ENCODE measurements at regions of chr12 and their contacts with region 1.

Region 1: DNA sequence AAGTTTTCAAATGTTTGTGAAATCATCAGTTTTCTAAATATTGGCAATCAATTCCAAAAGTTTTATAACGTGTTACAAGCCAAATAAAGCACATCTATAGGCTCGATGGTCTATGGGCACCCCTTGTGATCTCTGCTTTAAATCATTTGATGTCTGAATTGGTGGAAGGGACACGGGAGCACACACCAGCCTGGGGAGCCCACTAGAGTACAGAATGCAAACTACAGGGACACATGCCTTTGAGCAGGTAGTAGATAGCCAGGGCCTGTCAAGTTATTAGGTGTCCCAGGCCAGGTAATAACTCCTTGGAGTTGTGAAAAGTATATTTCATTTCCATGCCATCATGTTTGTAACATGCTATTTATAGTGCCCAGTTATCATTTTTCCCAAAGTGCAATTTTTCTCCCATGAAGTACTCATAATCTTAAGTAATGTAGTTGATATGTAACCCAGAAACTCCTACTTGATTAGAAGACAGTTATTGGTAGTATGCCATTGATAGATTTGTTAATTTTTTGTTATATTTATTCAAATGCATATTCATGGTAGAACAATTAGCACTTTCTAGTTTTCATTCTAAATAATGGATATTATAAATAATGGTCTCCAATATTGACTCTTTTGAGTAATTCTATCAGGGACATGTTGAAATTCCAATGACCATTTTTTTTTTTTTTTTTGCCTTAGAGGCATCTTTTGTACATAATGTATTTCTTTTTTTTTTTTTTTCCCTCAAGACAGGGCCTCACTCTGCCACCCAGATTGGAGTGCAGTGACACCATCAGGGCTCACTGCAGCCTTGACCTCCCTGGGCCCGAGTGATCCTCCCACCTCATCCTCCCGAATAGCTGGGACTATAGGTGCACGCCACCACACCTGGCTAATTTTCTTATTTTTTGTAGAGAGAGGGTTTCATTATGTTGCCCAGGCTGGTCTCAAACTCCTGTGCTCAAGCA is 96.9 kb upstream of the FGD4 start:
- DNase-seq: peak; percentile 19 to 54 (median 38)
- ATAC-seq: peak; percentile 94
- H3K4me3 ChIP-seq: no peak overlapping the region
- H3K27ac ChIP-seq: no peak overlapping the region
- H3K4me1 ChIP-seq: peaks cover 0 to 2% of the 10 kb centered on the region in 2 experiments; a peak in 1 of 5 replicates
- H3K27me3 ChIP-seq: no peaks in the 10 kb centered on the region
- CTCF ChIP-seq: peak; percentile 67 to 73 (median 70)
- EP300 ChIP-seq: no peak
- POLR2A ChIP-seq: no peak
- RAD21 ChIP-seq: peak; percentile 22 to 81; a peak in 3 of 4 replicates

Region 2: DNA sequence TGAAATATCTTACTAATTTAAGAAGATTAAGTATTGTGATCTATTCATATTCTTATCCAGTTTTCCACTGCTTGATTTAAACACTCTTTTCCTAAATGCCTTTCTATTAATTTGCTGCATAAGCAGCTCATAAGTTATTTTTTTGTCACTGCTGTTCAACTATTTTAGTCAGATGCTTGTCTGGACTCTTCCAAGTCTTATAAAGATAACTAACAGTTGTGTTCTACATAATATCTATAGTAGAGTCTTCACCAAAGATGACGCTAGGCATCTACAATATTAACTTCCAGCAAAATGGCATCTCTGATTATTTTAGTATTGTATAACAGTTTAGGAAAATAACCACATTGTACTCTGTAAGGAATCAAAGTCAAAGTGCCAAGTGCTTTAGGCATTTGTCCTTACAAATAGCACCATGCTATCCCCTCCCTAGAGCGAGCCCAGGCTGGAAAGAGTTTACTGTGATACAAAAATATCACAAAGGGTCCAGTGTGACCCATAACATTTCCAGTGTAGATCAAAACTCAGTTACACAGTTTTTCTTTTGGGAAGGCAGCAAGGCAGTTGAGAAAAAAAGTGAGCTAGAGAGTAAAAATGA is 809.8 kb before region 1 on chr12:
- CTCF ChIA-PET with region 1: no interaction called
- POLR2A ChIA-PET with region 1: no interaction called
- in situ Hi-C with region 1: no loop called
- intact Hi-C with region 1: no loop called
- DNase-seq: no peak
- ATAC-seq: no peak
- H3K4me3 ChIP-seq: no peak overlapping the region
- H3K27ac ChIP-seq: no peak overlapping the region
- H3K4me1 ChIP-seq: no peaks in the 10 kb centered on the region
- H3K27me3 ChIP-seq: no peaks in the 10 kb centered on the region
- CTCF ChIP-seq: no peak
- EP300 ChIP-seq: no peak
- POLR2A ChIP-seq: no peak
- RAD21 ChIP-seq: no peak

Region 3: DNA sequence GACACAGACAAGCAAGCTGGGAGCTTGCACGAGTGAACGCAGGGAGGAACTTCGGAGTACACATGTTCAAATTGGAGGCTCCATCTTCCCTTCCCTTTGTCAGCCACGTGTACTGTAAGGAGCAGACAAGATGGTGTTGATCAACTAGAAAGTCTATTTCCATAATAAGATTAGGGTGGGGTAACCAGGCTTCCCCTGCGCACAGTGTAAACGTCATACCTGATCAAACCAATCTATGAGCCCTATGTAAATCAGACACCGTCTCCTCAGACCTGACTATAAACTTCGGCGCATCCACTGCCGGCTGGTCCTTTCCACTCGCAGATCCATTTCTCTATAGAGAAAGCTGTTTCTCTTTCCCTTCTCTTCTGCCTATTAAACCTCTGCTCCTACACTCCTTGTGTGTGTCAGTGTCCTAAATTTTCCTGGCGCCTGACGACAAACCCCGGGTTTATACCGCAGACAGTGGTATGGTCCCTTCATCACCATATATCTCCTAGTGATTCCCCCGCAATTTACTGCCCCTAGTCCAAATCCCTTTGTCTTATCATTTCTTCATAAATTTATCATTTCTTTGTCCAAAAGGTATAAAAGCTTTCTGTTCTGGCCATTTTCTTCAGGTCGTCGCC is 650.5 kb before region 1 on chr12:
- CTCF ChIA-PET with region 1: interaction called, 8 read pairs
- POLR2A ChIA-PET with region 1: no interaction called
- in situ Hi-C with region 1: loop called (anchors 5 kb)
- intact Hi-C with region 1: loop called (anchors 2 kb)
- DNase-seq: peak in 1 of 4 experiments; percentile 60
- ATAC-seq: peak; percentile 69
- H3K4me3 ChIP-seq: peak overlapping the region; percentile 23; the same call in 1 of the 2 replicates
- H3K27ac ChIP-seq: no peak overlapping the region; the same call in 2 of the 3 replicates
- H3K4me1 ChIP-seq: peaks cover 3 to 6% of the 10 kb centered on the region in 2 experiments; a peak in 3 of 5 replicates
- H3K27me3 ChIP-seq: 0 out of 5 replicates have a peak, but pooled peaks cover 0 to 2% of the 10 kb centered on the region in 2 experiments
- CTCF ChIP-seq: no peak
- EP300 ChIP-seq: no peak
- POLR2A ChIP-seq: no peak; the same call in 1 of the 2 replicates
- RAD21 ChIP-seq: no peak

Region 4: DNA sequence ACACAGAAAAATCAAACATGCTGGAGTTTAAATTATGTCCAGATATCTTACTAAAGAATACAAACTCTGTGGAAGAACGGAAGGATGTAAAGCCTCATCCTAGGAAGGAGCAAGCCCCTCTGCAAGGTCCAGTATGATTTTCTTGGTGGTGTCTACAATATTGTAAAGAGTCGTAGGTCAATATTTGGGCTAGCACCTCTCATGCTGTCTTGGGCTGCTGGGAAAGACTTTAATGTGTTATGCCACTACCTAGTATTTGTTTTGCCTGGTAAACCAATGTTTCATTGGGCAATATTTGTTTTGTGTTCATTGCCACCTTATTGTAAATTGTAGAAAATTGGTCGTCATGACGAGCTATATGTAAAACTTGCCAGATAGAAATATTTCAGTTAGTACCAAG is 316.7 kb before region 1 on chr12:
- CTCF ChIA-PET with region 1: no interaction called
- POLR2A ChIA-PET with region 1: no interaction called
- in situ Hi-C with region 1: no loop called
- intact Hi-C with region 1: no loop called
- DNase-seq: no peak
- ATAC-seq: no peak
- H3K4me3 ChIP-seq: no peak overlapping the region
- H3K27ac ChIP-seq: no peak overlapping the region
- H3K4me1 ChIP-seq: no peaks in the 10 kb centered on the region
- H3K27me3 ChIP-seq: no peaks in the 10 kb centered on the region
- CTCF ChIP-seq: no peak
- EP300 ChIP-seq: no peak
- POLR2A ChIP-seq: no peak
- RAD21 ChIP-seq: no peak

Region 5: DNA sequence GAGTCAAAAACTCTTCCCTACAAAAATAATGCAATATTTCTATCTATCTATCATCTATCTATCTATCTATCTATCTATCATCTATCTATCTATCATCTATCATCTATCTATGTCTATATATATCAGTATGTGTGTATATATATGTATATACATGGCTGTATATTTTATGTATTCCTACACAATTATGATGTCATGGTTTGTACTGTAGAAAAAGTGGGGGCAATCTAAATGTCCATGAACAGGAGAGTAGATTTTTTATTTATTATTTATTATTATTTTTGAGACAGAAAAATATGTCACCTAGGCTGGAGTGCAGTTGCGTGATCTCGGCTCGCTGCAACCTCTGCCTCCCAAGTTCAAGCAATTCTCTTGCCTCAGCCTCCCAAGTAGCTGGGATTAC is 241.5 kb before region 1 on chr12:
- CTCF ChIA-PET with region 1: interaction called, 3 read pairs
- POLR2A ChIA-PET with region 1: no interaction called
- in situ Hi-C with region 1: loop called (anchors 5 kb)
- intact Hi-C with region 1: loop called (anchors 2 kb)
- DNase-seq: no peak
- ATAC-seq: no peak
- H3K4me3 ChIP-seq: no peak overlapping the region
- H3K27ac ChIP-seq: no peak overlapping the region
- H3K4me1 ChIP-seq: no peaks in the 10 kb centered on the region
- H3K27me3 ChIP-seq: no peaks in the 10 kb centered on the region
- CTCF ChIP-seq: no peak
- EP300 ChIP-seq: no peak
- POLR2A ChIP-seq: no peak
- RAD21 ChIP-seq: no peak

Region 6: GRCh38 chr12:32106517-32107358 is 195.8 kb before region 1 on chr12 and contains the start of gene BICD1:
- CTCF ChIA-PET with region 1: no interaction called
- POLR2A ChIA-PET with region 1: no interaction called
- in situ Hi-C with region 1: no loop called
- intact Hi-C with region 1: loop called (anchors 5 kb)
- DNase-seq: peak; percentile 90 to 92 (median 90)
- ATAC-seq: peak; percentile 97
- H3K4me3 ChIP-seq: peak within 1 kb of the TSS; percentile 72
- H3K27ac ChIP-seq: peak within 1 kb of the TSS; percentile 76
- H3K4me1 ChIP-seq: peaks cover 21% of the 10 kb centered on the region in 2 experiments; a peak in 4 of 5 replicates
- H3K27me3 ChIP-seq: no peaks in the 10 kb centered on the region
- CTCF ChIP-seq: peak in 2 of 3 experiments; percentile 71 to 92; a peak in 5 of 6 replicates
- EP300 ChIP-seq: peak; percentile 15; the same call in 1 of the 2 replicates
- POLR2A ChIP-seq: peak; percentile 81
- RAD21 ChIP-seq: peak; percentile 63 to 70
- polyA plus RNA-seq, gene BICD1: 3.5 to 3.7 TPM

Region 7: GRCh38 chr12:32261638-32262037 is 40.9 kb before region 1 on chr12:
- CTCF ChIA-PET with region 1: no interaction called
- POLR2A ChIA-PET with region 1: no interaction called
- in situ Hi-C with region 1: no loop called
- intact Hi-C with region 1: loop called (anchors 1 kb)
- DNase-seq: peak in 2 of 4 experiments; percentile 16 to 29
- ATAC-seq: peak; percentile 74
- H3K4me3 ChIP-seq: no peak overlapping the region
- H3K27ac ChIP-seq: no peak overlapping the region
- H3K4me1 ChIP-seq: peaks cover 0 to 14% of the 10 kb centered on the region in 2 experiments; a peak in 2 of 5 replicates
- H3K27me3 ChIP-seq: no peaks in the 10 kb centered on the region
- CTCF ChIP-seq: peak; percentile 44 to 58 (median 51)
- EP300 ChIP-seq: no peak
- POLR2A ChIP-seq: no peak
- RAD21 ChIP-seq: peak in 1 of 2 experiments; percentile 56; a peak in 2 of 4 replicates

Region 8: GRCh38 chr12:32650508-32650907 is 348.0 kb after region 1 on chr12:
- CTCF ChIA-PET with region 1: no interaction called
- POLR2A ChIA-PET with region 1: no interaction called
- in situ Hi-C with region 1: no loop called
- intact Hi-C with region 1: no loop called
- DNase-seq: no peak
- ATAC-seq: no peak
- H3K4me3 ChIP-seq: no peak overlapping the region
- H3K27ac ChIP-seq: no peak overlapping the region
- H3K4me1 ChIP-seq: no peaks in the 10 kb centered on the region
- H3K27me3 ChIP-seq: peaks cover 10 to 33% of the 10 kb centered on the region in 2 experiments; a peak in 4 of 5 replicates
- CTCF ChIP-seq: no peak
- EP300 ChIP-seq: no peak
- POLR2A ChIP-seq: no peak
- RAD21 ChIP-seq: no peak